Heart left ventricle (tissue), 16 donors: ENCODE measurements at regions of chrX and their contacts with region 1.

Region 1: GRCh38 chrX:129925305-129926092 is 19.5 kb downstream of the UTP14A start:
- DNase-seq: peak in 4 of 5 donors; percentile 50 to 69 (median 60)
- ATAC-seq: peak in 3 of 4 donors; percentile 75 to 83 (median 83)
- H3K4me3 ChIP-seq: no peak overlapping the region
- H3K27ac ChIP-seq: no peak overlapping the region
- H3K4me1 ChIP-seq: peaks cover 0 to 2% (median 0%) of the 10 kb centered on the region in 12 donors
- H3K27me3 ChIP-seq: no peaks in the 10 kb centered on the region
- CTCF ChIP-seq: peak; percentile 55 to 72 (median 62)
- POLR2A ChIP-seq: no peak

Region 2: DNA sequence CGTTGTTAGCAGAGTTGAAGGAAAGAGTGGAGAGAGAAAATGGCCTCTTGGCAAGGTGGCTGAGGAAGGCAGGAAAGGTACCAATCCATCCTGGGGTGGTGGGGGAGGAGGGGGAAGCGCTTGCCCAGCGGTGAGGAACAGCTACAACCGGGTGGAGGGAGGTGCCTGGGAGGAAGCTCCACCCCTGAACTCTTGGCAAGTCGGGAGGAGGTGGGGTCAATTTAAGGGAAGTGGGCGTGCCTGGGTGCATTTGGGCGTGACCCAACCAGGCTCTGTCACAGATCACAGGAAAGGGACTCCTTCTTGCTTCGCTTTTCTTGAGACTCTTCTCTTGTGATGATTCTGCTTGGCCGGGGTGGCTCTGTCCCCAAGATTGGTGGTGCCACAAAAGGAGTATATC is 98.6 kb after region 1 on chrX:
- intact Hi-C with region 1: loop called in 9 of 10 experiments (anchors 1 to 10 kb)
- DNase-seq: peak; percentile 76 to 82 (median 81)
- ATAC-seq: peak; percentile 80 to 98 (median 92)
- H3K4me3 ChIP-seq: no peak overlapping the region
- H3K27ac ChIP-seq: peak overlapping the region in 4 of 12 donors; percentile 6 to 41 (median 26)
- H3K4me1 ChIP-seq: peaks cover 0 to 14% (median 5%) of the 10 kb centered on the region in 12 donors
- H3K27me3 ChIP-seq: no peaks in the 10 kb centered on the region
- CTCF ChIP-seq: no peak
- POLR2A ChIP-seq: no peak

Region 3: DNA sequence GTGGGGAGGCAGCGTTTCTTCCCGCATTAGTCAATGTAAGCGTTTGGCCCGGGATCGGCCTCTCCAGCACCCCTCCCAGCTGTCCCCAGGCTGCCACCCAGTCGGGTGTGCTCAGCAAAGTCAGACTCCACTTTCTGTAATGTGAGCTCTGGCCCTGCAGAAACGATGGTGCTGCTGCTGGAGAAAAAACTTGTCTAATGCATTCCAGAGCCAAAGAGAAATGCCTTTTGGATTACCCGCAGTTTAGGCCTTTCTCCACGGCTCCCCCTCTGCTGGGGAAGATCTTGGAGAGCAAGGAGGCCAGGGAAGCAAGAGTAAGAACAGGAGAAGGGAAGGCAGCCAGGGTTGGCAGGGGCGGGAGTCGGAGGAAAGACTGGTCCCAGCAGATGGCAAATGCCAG is 129.6 kb after region 1 on chrX:
- intact Hi-C with region 1: loop called in 9 of 10 experiments (anchors 1 to 10 kb)
- DNase-seq: peak in 1 of 5 donors; percentile 37
- ATAC-seq: peak in 3 of 4 donors; percentile 24 to 35 (median 32)
- H3K4me3 ChIP-seq: no peak overlapping the region
- H3K27ac ChIP-seq: no peak overlapping the region
- H3K4me1 ChIP-seq: peaks cover 0 to 6% (median 0%) of the 10 kb centered on the region in 12 donors
- H3K27me3 ChIP-seq: no peaks in the 10 kb centered on the region
- CTCF ChIP-seq: no peak
- POLR2A ChIP-seq: no peak

Region 4: GRCh38 chrX:130060122-130061069 is 134.9 kb after region 1 on chrX:
- intact Hi-C with region 1: loop called in 9 of 10 experiments (anchors 1 to 10 kb)
- DNase-seq: peak; percentile 74 to 92 (median 81)
- ATAC-seq: peak; percentile 81 to 94 (median 92)
- H3K4me3 ChIP-seq: peak overlapping the region; percentile 21 to 67 (median 55)
- H3K27ac ChIP-seq: peak overlapping the region in 11 of 12 donors; percentile 18 to 77 (median 43)
- H3K4me1 ChIP-seq: peaks cover 0 to 6% (median 0%) of the 10 kb centered on the region in 12 donors
- H3K27me3 ChIP-seq: no peaks in the 10 kb centered on the region
- CTCF ChIP-seq: peak; percentile 74 to 90 (median 80)
- POLR2A ChIP-seq: peak in 1 of 2 donors; percentile 9

Region 5: DNA sequence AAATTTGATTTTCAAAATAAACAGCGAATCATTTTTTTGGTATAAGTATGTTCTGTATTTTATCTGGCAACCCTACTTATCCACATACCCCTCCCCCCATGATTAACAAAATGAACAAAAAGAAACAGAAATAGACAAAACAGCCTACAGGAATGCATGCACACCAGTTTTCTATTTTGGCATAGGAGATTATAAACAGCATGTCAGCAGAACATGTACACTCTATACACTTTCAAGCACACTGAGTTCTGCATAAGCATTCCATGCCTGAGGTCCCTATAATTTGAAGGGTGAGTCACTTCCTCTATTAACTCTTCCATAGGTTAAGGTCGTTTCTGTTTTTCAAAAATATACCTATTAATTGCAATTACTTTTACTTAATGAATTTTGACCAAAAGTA is 371.2 kb after region 1 on chrX:
- intact Hi-C with region 1: no loop called
- DNase-seq: no peak
- ATAC-seq: no peak
- H3K4me3 ChIP-seq: no peak overlapping the region
- H3K27ac ChIP-seq: no peak overlapping the region
- H3K4me1 ChIP-seq: no peaks in the 10 kb centered on the region
- H3K27me3 ChIP-seq: peaks cover 0 to 12% (median 0%) of the 10 kb centered on the region in 9 donors
- CTCF ChIP-seq: no peak
- POLR2A ChIP-seq: no peak